Right cardiac atrium (tissue), 5 donors: ENCODE measurements at regions of chr2 and their contacts with region 1.

Region 1: DNA sequence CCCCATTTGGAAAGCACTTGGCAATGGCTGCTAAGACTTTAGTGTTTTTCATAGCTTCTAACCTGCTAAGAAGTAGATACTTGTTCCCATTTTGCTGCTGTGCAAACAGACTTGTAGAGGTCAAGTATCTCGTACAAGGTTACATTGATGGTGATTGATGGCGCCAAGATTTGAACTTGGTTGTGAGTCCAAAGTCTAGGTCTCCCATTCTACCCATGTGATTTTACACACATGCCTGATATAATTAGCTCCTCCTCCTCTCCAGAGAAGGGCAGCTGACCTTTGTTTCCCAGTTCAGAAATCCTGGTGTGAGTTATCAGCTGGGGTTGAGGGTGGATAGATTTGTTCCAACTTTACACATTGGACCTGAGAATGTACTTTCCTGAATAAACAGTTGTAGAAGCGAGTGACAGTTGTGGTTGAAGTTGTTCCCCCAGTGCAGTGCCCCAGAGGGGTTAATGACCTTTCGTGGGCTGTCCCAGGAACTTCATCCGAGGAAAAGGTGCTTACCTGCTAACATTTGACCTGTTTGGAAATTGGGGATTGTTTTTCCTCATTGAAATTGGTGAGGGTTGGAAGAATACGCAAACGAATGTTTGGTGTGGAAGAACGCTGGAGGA is 10.4 kb downstream of the TCF7L1 start:
- DNase-seq: no peak
- ATAC-seq: no peak
- H3K4me3 ChIP-seq: no peak overlapping the region
- H3K27ac ChIP-seq: no peak overlapping the region
- H3K4me1 ChIP-seq: peaks cover 7% of the 10 kb centered on the region
- H3K27me3 ChIP-seq: no peaks in the 10 kb centered on the region

Region 2: GRCh38 chr2:85175369-85176299 is 32.1 kb after region 1 on chr2:
- intact Hi-C with region 1: loop called in 1 of 4 experiments (anchors 5 kb)
- DNase-seq: peak; percentile 51 to 74 (median 71)
- ATAC-seq: peak; percentile 78 to 81
- H3K4me3 ChIP-seq: no peak overlapping the region
- H3K27ac ChIP-seq: peak overlapping the region; percentile 46
- H3K4me1 ChIP-seq: peaks cover 19% of the 10 kb centered on the region
- H3K27me3 ChIP-seq: no peaks in the 10 kb centered on the region